ENCODE measurements at regions of chr17 and their contacts with region 1.

Region 1: GRCh38 chr17:34711646-34712045 is 132.3 kb downstream of the TMEM132E start:
- DNase-seq: no peak
- ATAC-seq: peak in 1 of 4 donors; percentile 32
- H3K4me3 ChIP-seq: no peak overlapping the region
- H3K27ac ChIP-seq: no peak overlapping the region
- H3K4me1 ChIP-seq: no peaks in the 10 kb centered on the region
- H3K27me3 ChIP-seq: peaks cover 0 to 4% (median 0%) of the 10 kb centered on the region in 4 donors
- CTCF ChIP-seq: no peak

Region 2: GRCh38 chr17:34750004-34750403 is 38.4 kb after region 1 on chr17:
- intact Hi-C with region 1: no loop called
- DNase-seq: no peak
- ATAC-seq: no peak
- H3K4me3 ChIP-seq: no peak overlapping the region
- H3K27ac ChIP-seq: no peak overlapping the region
- H3K4me1 ChIP-seq: no peaks in the 10 kb centered on the region
- H3K27me3 ChIP-seq: no peaks in the 10 kb centered on the region
- CTCF ChIP-seq: no peak

Region 3: GRCh38 chr17:34763728-34764665 is 52.4 kb after region 1 on chr17:
- intact Hi-C with region 1: loop called in 2 of 3 experiments (anchors 5 to 10 kb)
- DNase-seq: no peak
- ATAC-seq: no peak
- H3K4me3 ChIP-seq: no peak overlapping the region
- H3K27ac ChIP-seq: no peak overlapping the region
- H3K4me1 ChIP-seq: no peaks in the 10 kb centered on the region
- H3K27me3 ChIP-seq: no peaks in the 10 kb centered on the region
- CTCF ChIP-seq: no peak

Measured in pancreas (tissue), 10 donors.